IMR-90 (cell line): ENCODE measurements at regions of chr7 and their contacts with region 1.

Region 1: GRCh38 chr7:140631602-140632001 is 9.0 kb downstream of the DENND2A start:
- DNase-seq: no peak
- ATAC-seq: peak; percentile 9
- H3K4me3 ChIP-seq: no peak overlapping the region
- H3K27ac ChIP-seq: no peak overlapping the region
- H3K4me1 ChIP-seq: peaks cover 12% of the 10 kb centered on the region
- H3K27me3 ChIP-seq: no peaks in the 10 kb centered on the region
- CTCF ChIP-seq: no peak
- POLR2A ChIP-seq: no peak
- RAD21 ChIP-seq: no peak

Region 2: GRCh38 chr7:140526787-140527664 is 104.6 kb before region 1 on chr7:
- CTCF ChIA-PET with region 1: no interaction called
- POLR2A ChIA-PET with region 1: interaction called, 12 read pairs
- dilution Hi-C with region 1: no loop called
- in situ Hi-C with region 1: no loop called
- intact Hi-C with region 1: no loop called
- DNase-seq: peak; percentile 33
- ATAC-seq: peak; percentile 49; the same call in 1 of the 2 replicates
- H3K4me3 ChIP-seq: no peak overlapping the region
- H3K27ac ChIP-seq: no peak overlapping the region
- H3K4me1 ChIP-seq: peaks cover 4% of the 10 kb centered on the region; the same call in 1 of the 2 replicates
- H3K27me3 ChIP-seq: no peaks in the 10 kb centered on the region
- CTCF ChIP-seq: no peak
- POLR2A ChIP-seq: no peak
- RAD21 ChIP-seq: no peak

Region 3: DNA sequence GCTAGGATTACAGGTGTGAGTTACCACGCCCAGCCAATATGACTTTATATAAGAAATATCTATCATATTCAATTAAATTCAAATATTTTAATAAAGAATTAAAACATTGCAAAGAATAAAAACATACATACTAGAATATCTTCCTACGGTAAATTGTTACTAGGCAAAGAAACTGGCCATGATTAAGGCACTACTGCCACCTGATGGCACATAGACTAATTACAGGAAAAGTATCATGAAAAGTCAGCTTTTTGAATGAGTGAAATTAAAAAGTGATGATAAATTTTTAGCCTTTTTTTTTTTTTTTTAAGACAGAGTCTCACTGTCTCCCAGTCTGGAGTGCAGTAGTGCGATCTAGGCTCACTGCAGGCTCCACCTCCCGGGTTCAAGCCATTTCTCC is 352.2 kb after region 1 on chr7:
- CTCF ChIA-PET with region 1: no interaction called
- POLR2A ChIA-PET with region 1: no interaction called
- dilution Hi-C with region 1: no loop called
- in situ Hi-C with region 1: no loop called
- intact Hi-C with region 1: no loop called
- DNase-seq: peak; percentile 12
- ATAC-seq: no peak
- H3K4me3 ChIP-seq: no peak overlapping the region
- H3K27ac ChIP-seq: no peak overlapping the region
- H3K4me1 ChIP-seq: no peaks in the 10 kb centered on the region
- H3K27me3 ChIP-seq: no peaks in the 10 kb centered on the region
- CTCF ChIP-seq: peak; percentile 27; the same call in 1 of the 2 replicates
- POLR2A ChIP-seq: no peak
- RAD21 ChIP-seq: peak; percentile 42